ENCODE measurements at regions of chr4 and their contacts with region 1.

Region 1: GRCh38 chr4:104860238-104861123 is 286.2 kb upstream of the TET2 start:
- DNase-seq: peak; percentile 67
- H3K4me3 ChIP-seq: no peak overlapping the region
- H3K27ac ChIP-seq: no peak overlapping the region
- H3K4me1 ChIP-seq: no peaks in the 10 kb centered on the region
- H3K27me3 ChIP-seq: no peaks in the 10 kb centered on the region
- CTCF ChIP-seq: peak; percentile 73 to 90 (median 85)
- EP300 ChIP-seq: no peak
- POLR2A ChIP-seq: no peak

Region 2: DNA sequence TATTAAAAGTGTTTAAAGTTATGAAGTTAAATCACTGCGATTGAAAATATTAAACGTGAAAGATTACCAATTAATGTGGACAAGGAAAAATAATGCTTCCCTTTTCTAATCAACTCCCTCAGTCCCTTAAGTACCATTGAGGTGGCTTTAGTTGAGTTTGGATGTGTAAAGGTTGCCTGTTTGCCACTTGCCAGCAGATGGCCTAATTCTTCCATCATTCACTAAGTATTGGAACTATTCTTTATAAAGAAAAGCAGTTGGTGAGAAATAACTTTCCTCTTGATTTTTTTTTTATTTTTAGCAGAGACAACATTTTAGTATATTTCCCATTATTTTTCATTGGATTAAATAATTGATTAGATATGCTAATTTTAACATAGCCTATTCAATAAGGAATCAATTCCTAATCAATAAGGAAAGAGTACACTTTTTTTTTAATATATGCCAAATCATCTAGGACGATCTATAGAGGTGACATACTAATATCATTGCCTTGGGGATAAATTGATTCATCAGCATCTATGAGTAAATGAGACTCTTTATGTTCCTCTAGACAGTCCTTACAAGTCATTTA is 844.7 kb before region 1 on chr4:
- intact Hi-C with region 1: loop called (anchors 10 kb)
- DNase-seq: no peak
- H3K4me3 ChIP-seq: no peak overlapping the region
- H3K27ac ChIP-seq: no peak overlapping the region
- H3K4me1 ChIP-seq: no peaks in the 10 kb centered on the region
- H3K27me3 ChIP-seq: no peaks in the 10 kb centered on the region
- CTCF ChIP-seq: peak in 1 of 4 experiments; percentile 11
- EP300 ChIP-seq: no peak
- POLR2A ChIP-seq: no peak

Region 3: DNA sequence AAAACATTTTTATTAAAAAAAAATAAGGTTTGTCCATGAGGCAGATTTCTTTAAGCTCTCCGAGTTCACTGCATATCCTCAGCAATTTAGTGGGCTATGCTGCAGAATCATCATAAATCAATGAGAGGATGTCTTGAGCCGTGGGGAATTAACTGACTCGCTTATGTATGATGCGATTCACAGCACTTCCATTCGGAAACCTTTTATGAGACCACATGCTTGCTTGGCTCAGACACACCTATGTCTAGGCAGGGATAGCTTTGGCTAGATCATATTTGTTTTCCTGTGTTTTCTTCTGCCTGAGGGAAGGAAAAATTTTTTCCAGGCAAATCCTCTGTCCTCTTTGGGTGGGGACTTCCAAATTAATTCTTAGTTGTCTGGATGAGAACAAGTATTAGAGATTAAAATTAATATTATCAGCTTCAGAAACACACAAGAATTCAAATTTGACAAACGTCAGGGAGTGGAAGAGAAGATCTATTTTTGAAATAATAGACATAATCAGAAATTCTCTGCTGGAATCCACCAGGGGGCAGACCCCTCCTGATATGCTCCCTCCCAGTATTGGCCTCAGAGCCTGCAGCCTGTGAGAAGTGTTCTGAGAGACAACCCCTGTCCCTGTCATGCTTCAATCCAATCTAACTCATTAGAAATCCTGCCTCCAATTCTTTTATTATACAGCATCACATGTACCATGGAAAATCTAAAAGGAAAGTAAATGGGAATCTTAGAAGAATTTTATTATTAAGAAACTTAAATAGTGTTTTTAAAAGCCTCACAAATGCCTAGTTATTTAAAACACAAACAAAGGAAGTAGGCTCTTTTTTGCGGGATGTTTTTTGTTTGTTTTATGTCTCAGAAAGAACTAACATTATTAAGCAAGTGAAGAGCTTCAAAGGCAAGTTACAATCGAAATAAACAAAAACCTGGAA is 795.6 kb before region 1 on chr4:
- intact Hi-C with region 1: loop called (anchors 5 kb)
- DNase-seq: no peak
- H3K4me3 ChIP-seq: no peak overlapping the region
- H3K27ac ChIP-seq: no peak overlapping the region
- H3K4me1 ChIP-seq: no peaks in the 10 kb centered on the region
- H3K27me3 ChIP-seq: no peaks in the 10 kb centered on the region
- CTCF ChIP-seq: peak in 3 of 4 experiments; percentile 16 to 43 (median 31)
- EP300 ChIP-seq: no peak
- POLR2A ChIP-seq: no peak

Measured in sigmoid colon (tissue), 7 donors.